Activated B cell treated with CpG ODN at 0.5 μM for 24 hours (primary cell): ENCODE measurements at regions of chr18 and their contacts with region 1.

Region 1: DNA sequence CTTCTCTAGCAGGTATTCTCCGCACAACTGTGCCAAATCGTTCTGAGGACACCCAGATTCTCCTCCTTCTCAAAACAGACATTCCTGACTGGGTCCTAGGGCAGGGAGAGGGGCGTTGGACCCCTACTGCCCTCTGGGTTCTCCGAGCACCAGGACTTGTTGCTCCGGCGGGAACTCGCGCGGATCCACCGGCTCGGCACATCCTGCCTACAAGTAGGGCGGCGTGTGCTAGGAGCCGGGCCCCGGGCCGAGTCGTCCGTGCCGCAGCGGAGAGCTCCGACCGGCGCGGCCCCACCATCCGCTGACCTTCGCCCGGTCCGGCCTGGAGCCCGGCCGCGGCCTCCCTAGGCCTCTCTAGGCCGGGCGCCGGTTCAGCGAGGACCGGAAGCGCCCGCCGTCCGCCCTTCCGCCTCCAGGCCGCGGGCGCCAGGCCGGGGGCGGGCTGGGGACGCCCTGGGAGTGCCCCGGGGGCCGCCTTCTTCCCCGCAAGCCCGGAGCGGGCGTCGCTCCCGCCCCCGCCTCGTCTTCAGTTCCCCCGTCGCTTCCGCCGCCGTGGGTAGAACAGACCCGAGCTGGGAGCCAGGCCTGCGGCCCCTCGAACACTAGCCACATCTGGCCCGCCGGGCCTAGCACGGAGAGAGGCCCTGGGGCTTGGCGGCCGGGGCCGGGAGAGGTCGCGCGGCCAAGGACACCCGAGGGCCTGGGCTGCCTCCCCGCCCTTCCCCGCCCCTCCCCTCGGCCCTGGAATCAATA is 7.6 kb upstream of the ONECUT2 start:
- DNase-seq: no peak
- ATAC-seq: no peak
- H3K4me3 Mint-ChIP-seq: no peak overlapping the region
- H3K27ac Mint-ChIP-seq: no peak overlapping the region
- H3K4me1 Mint-ChIP-seq: peaks cover 11% of the 10 kb centered on the region
- H3K27me3 Mint-ChIP-seq: peaks cover 48% of the 10 kb centered on the region
- CTCF ChIP-seq: no peak

Region 2: DNA sequence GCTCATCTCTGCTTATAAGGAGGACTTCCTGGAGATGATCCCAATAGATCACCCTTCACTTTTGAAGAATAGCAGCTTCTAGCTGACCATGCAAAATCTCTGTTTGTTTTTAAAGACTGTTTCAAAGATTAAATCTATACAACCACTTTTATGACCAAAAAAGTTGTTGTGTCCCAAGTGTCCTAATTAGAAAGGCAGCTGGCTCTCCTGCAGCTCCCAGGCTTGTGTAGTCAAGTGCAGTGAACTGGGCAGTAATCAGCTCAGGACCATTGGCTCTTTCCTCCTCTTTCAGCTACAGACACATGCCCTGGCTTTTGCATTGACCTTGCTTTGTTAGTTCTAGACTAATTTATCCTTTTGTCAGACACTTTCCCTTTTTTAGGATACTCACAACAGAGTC is 64.9 kb before region 1 on chr18:
- CTCF ChIA-PET with region 1: no interaction called
- POLR2A ChIA-PET with region 1: no interaction called
- intact Hi-C with region 1: no loop called
- DNase-seq: no peak
- ATAC-seq: no peak
- H3K4me3 Mint-ChIP-seq: no peak overlapping the region
- H3K27ac Mint-ChIP-seq: no peak overlapping the region
- H3K4me1 Mint-ChIP-seq: no peaks in the 10 kb centered on the region
- H3K27me3 Mint-ChIP-seq: peaks cover 26% of the 10 kb centered on the region
- CTCF ChIP-seq: no peak

Region 3: DNA sequence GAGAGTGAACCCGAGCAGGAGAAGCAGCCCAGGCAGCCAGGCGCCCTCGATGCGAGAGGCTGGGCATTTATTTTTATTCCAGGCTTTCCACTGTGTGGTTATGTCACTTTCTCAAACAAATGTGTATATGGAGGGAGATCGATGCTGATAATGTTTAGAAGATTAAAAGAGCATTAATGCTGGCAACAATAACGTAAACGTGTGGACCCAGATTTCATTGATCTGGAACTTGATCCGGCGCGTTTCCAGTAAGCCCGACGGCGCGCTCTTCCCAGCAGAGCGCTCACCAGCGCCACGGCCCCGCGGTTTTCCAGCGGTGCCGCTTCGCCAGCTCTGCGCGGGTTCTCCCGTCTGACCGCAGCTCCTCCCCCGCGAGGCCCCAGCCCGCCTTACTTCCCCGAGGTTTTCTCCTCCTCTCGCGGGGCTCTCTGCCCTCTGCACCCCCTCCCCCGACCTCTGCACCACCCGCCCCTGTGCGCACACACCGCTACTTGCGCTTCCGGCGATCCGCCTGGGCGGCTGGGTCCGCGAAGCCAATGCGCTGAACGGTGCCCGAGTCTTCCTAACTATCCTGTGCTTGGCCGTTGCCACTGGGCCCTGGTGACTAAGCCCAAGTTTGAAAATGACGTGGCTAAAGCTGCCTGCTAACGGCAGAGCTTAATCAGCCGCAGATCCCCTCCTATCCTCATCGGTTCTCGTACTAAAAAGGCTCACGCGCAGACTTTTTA is 13.6 kb after region 1 on chr18:
- CTCF ChIA-PET with region 1: interaction called, 3 read pairs
- POLR2A ChIA-PET with region 1: no interaction called
- intact Hi-C with region 1: loop called (anchors 2 kb)
- DNase-seq: no peak
- ATAC-seq: peak; percentile 54
- H3K4me3 Mint-ChIP-seq: peak overlapping the region; percentile 39
- H3K27ac Mint-ChIP-seq: no peak overlapping the region
- H3K4me1 Mint-ChIP-seq: peaks cover 37% of the 10 kb centered on the region
- H3K27me3 Mint-ChIP-seq: peaks cover 80% of the 10 kb centered on the region
- CTCF ChIP-seq: no peak

Region 4: DNA sequence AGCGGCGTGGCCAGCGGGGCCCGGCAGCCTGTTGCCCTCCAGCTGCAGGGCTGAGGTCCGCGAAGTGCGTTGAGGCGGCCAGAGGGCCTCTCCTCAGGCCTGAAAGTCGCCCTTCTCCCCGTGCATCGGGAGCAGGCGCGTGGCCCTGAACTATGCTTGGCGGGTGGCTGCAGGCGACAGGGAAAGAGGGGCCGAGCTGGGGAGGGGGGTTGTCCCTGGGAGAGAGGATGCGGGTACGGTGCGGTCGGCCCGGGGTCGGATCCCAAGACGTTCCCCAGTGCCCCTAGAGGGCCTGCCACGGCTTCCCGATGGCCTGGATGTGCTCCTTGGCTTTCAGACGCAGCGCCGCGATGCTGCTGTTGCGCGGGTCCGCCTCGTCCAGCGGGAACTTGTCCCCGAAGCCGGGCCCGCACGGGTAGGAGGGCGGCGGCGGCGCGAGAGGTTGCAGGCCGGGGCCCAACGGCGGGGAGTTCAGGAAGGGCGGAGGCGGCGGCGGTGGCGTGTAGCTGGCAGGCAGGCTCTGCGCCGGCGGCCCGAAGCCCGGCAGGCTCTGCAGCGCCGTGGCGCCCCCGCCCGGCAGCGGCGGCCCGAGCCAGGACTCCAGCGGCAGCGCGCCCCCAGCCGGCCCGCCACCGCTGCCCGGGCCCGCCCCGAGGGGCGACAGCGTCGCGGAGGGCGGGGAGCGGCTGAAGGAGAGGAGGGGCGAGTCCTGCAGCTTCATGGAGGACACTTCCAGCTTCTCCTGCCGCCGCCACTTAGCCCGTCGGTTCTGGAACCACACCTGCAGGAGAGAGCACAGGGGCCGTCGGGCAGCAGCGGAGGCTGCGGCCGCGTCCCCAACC is 1841.3 kb after region 1 on chr18:
- CTCF ChIA-PET with region 1: no interaction called
- POLR2A ChIA-PET with region 1: no interaction called
- intact Hi-C with region 1: loop called (anchors 5 kb)
- DNase-seq: no peak
- ATAC-seq: peak; percentile 48
- H3K4me3 Mint-ChIP-seq: peak overlapping the region; percentile 66
- H3K27ac Mint-ChIP-seq: no peak overlapping the region
- H3K4me1 Mint-ChIP-seq: peaks cover 49% of the 10 kb centered on the region
- H3K27me3 Mint-ChIP-seq: peaks cover 67% of the 10 kb centered on the region
- CTCF ChIP-seq: no peak